ENCODE measurements at regions of chr11 and their contacts with region 1.

Region 1: GRCh38 chr11:75351791-75352587 is 528 bp upstream of the ARRB1 start:
- DNase-seq: peak; percentile 61
- H3K4me3 Mint-ChIP-seq: peak overlapping the region; percentile 86
- H3K27ac Mint-ChIP-seq: peak overlapping the region; percentile 93
- H3K4me1 Mint-ChIP-seq: peaks cover 53% of the 10 kb centered on the region
- H3K27me3 Mint-ChIP-seq: peaks cover 3% of the 10 kb centered on the region

Region 2: DNA sequence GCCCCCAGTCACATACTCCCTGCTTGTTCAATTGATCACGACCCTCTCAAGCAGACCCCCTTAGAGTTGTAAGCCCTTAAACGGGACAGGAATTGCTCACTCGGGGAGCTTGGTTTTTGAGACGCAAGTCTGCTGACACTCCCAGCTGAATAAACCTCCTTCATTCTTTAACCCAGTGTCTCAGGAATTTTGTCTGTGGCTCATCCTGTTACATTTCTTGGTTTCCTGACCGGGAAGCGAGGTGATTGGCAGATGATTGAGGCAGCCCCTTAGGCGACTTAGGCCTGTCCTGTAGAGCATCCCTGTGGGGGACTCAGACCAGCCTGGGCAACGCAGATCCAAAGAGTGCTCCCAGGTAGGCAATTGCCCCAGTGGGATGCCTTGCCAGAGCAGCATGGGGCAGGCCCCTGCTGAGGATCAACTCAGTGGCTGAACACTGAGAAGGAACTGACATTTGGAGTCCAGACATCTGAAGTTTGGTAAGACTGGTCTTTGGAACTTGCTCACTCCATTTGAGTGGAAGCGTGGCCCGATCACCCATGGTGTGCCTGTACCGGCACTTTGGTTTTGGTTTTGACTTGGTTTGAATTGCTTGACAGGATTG is 311.7 kb before region 1 on chr11:
- CTCF ChIA-PET with region 1: no interaction called
- POLR2A ChIA-PET with region 1: no interaction called
- DNase-seq: no peak
- H3K4me3 Mint-ChIP-seq: no peak overlapping the region
- H3K27ac Mint-ChIP-seq: no peak overlapping the region
- H3K4me1 Mint-ChIP-seq: peaks cover 3% of the 10 kb centered on the region
- H3K27me3 Mint-ChIP-seq: peaks cover 7% of the 10 kb centered on the region

Region 3: GRCh38 chr11:75263944-75264349 is 88.0 kb before region 1 on chr11:
- CTCF ChIA-PET with region 1: no interaction called
- POLR2A ChIA-PET with region 1: no interaction called
- DNase-seq: no peak
- H3K4me3 Mint-ChIP-seq: no peak overlapping the region
- H3K27ac Mint-ChIP-seq: peak overlapping the region; percentile 43
- H3K4me1 Mint-ChIP-seq: peaks cover 36% of the 10 kb centered on the region
- H3K27me3 Mint-ChIP-seq: no peaks in the 10 kb centered on the region

Region 4: GRCh38 chr11:75371941-75372789 is 20.2 kb after region 1 on chr11:
- CTCF ChIA-PET with region 1: interaction called, 6 read pairs
- POLR2A ChIA-PET with region 1: interaction called, 10 read pairs
- DNase-seq: no peak
- H3K4me3 Mint-ChIP-seq: no peak overlapping the region
- H3K27ac Mint-ChIP-seq: peak overlapping the region; percentile 27
- H3K4me1 Mint-ChIP-seq: peaks cover 29% of the 10 kb centered on the region
- H3K27me3 Mint-ChIP-seq: no peaks in the 10 kb centered on the region